PC-9 (cell line): ENCODE measurements at regions of chr5 and their contacts with region 1.

Region 1: DNA sequence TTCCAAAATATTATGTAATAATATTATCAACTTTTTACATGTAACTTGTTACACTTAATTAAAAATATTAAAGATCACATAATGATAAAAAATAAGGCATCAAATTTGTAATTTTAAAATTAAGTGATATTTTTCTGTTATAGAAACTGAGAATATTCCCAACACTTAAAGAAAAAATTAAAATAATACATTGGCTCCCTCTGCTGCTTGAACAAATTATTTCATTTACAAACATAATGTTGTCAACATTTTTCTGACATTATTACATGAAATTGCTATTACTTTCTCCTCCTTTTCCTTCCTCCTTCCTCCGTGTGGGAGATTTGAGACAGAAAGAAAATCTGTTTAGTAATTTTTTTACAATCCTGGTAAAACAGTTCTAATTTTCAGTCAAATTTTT is 42.3 kb downstream of the RNF180 start:
- DNase-seq: no peak
- H3K4me3 ChIP-seq: no peak overlapping the region
- H3K27ac ChIP-seq: no peak overlapping the region
- H3K4me1 ChIP-seq: no peaks in the 10 kb centered on the region
- H3K27me3 ChIP-seq: no peaks in the 10 kb centered on the region
- CTCF ChIP-seq: peak; percentile 68

Region 2: DNA sequence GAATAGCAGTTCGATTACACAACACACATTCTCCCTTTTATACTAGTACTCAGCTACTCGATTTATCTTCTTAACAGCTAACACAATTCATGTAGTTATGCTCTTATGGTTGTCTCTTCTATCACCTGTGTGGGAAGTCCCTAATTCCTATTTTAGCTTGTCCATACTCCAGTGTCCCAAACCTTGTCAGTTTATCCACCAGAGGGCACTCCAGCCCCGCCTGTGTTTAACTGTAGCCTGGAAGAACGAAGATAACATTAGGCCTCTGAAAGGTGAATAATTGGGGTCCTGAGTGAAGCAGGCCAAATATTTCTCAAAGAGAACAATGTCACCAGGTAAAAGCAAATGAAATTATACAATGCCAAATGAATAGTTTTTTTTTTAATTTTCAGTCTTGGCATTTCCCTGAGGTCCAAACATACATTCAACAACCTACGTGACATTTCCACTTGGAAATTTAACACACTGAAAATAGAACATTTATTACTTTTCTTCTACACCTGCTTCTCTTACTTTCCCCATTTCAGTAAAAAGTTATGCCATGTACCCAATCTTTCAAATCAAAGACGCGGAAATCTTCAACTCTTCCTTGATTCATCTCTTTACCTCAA is 806.4 kb before region 1 on chr5:
- CTCF ChIA-PET with region 1: no interaction called
- POLR2A ChIA-PET with region 1: no interaction called
- intact Hi-C with region 1: loop called (anchors 5 kb)
- DNase-seq: peak in 1 of 2 experiments; percentile 49
- H3K4me3 ChIP-seq: no peak overlapping the region
- H3K27ac ChIP-seq: no peak overlapping the region
- H3K4me1 ChIP-seq: no peaks in the 10 kb centered on the region
- H3K27me3 ChIP-seq: no peaks in the 10 kb centered on the region
- CTCF ChIP-seq: peak; percentile 79

Region 3: GRCh38 chr5:64074533-64074932 is 133.4 kb before region 1 on chr5:
- CTCF ChIA-PET with region 1: no interaction called
- POLR2A ChIA-PET with region 1: no interaction called
- intact Hi-C with region 1: loop called (anchors 2 kb)
- DNase-seq: peak in 1 of 2 experiments; percentile 1
- H3K4me3 ChIP-seq: no peak overlapping the region
- H3K27ac ChIP-seq: no peak overlapping the region
- H3K4me1 ChIP-seq: no peaks in the 10 kb centered on the region
- H3K27me3 ChIP-seq: no peaks in the 10 kb centered on the region
- CTCF ChIP-seq: peak; percentile 62

Region 4: GRCh38 chr5:64147849-64148441 is 60.0 kb before region 1 on chr5:
- CTCF ChIA-PET with region 1: no interaction called
- POLR2A ChIA-PET with region 1: no interaction called
- intact Hi-C with region 1: loop called (anchors 5 kb)
- DNase-seq: peak in 1 of 2 experiments; percentile 34
- H3K4me3 ChIP-seq: no peak overlapping the region
- H3K27ac ChIP-seq: no peak overlapping the region
- H3K4me1 ChIP-seq: no peaks in the 10 kb centered on the region
- H3K27me3 ChIP-seq: no peaks in the 10 kb centered on the region
- CTCF ChIP-seq: peak; percentile 76